MCF 10A (cell line): ENCODE measurements at regions of chr2 and their contacts with region 1.

Region 1: DNA sequence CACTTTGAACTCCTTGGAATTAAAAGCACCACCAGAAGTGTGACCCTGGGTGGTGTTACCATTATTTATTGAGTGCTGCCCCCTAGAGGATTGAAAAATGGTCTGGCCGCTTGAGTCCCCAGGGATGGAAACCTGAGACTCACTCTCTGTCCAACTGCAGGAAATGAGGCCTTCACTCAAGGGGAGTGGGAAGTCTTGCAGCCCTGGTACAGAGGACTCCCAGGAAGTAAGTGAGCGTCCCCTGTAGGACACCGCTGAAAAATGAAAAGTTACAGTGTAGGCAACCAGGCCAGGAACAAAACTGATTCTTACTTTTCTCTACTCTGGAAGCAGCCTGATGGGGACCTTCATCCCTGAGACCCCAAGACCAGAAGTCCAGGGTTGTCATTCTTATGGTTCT is 2.2 kb upstream of the NRP2 start:
- DNase-seq: peak; percentile 95
- H3K4me3 Mint-ChIP-seq: no peak overlapping the region
- H3K27ac Mint-ChIP-seq: no peak overlapping the region
- H3K4me1 Mint-ChIP-seq: peaks cover 25% of the 10 kb centered on the region
- H3K27me3 Mint-ChIP-seq: no peaks in the 10 kb centered on the region
- CTCF ChIP-seq: peak; percentile 61

Region 2: DNA sequence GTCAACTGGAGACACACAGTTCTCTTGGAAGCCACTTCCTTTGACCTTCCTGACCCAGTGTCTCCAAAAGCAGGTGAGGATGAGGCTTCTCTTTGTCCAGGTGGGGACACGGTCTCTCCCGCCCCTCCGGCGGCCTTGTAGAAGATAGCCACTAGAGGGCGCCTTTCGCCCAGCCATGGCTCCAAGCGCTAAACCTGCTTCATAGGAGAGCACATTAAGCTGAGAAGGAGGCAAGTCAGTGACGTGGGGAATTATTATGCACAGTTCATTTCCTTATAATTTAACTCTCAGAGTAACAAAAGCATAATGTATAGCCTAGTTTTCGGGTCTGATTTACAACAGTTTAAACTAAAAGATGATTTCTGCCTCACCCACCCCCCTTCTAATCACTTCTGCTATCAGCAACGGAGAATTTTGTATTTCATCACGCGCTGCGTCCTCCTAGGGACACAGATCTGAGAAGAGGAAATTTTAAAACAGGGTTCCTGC is 1534.8 kb before region 1 on chr2:
- CTCF ChIA-PET with region 1: no interaction called
- POLR2A ChIA-PET with region 1: no interaction called
- intact Hi-C with region 1: loop called (anchors 5 kb)
- DNase-seq: peak; percentile 81
- H3K4me3 Mint-ChIP-seq: peak overlapping the region; percentile 69
- H3K27ac Mint-ChIP-seq: no peak overlapping the region
- H3K4me1 Mint-ChIP-seq: peaks cover 5% of the 10 kb centered on the region
- H3K27me3 Mint-ChIP-seq: peaks cover 57% of the 10 kb centered on the region
- CTCF ChIP-seq: peak; percentile 90

Region 3: DNA sequence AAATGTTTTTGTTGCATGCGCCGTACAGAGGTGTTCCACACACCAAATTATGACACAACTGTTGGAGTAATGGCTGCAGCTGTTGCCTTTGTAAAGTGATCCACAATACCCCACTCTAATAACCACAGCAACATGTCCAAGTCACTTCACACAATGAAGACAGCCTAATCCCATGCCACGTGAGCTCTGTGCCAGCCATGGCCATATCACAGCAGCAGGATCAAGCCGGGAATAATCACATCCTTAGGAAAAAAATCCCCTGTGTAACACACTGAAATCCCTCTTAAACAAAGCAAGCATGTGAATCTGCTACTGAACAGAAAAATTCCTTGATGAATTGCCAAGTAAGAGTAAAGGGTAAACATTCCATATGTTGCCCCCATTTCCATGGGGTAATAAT is 1314.3 kb before region 1 on chr2:
- CTCF ChIA-PET with region 1: interaction called, 11 read pairs
- POLR2A ChIA-PET with region 1: no interaction called
- intact Hi-C with region 1: no loop called
- DNase-seq: no peak
- H3K4me3 Mint-ChIP-seq: no peak overlapping the region
- H3K27ac Mint-ChIP-seq: no peak overlapping the region
- H3K4me1 Mint-ChIP-seq: no peaks in the 10 kb centered on the region
- H3K27me3 Mint-ChIP-seq: no peaks in the 10 kb centered on the region
- CTCF ChIP-seq: no peak

Region 4: GRCh38 chr2:204871231-204871953 is 808.7 kb before region 1 on chr2:
- CTCF ChIA-PET with region 1: interaction called, 61 read pairs
- POLR2A ChIA-PET with region 1: no interaction called
- intact Hi-C with region 1: loop called (anchors 1 kb)
- DNase-seq: peak; percentile 47
- H3K4me3 Mint-ChIP-seq: no peak overlapping the region
- H3K27ac Mint-ChIP-seq: peak overlapping the region; percentile 7
- H3K4me1 Mint-ChIP-seq: peaks cover 17% of the 10 kb centered on the region
- H3K27me3 Mint-ChIP-seq: no peaks in the 10 kb centered on the region
- CTCF ChIP-seq: peak; percentile 30

Region 5: DNA sequence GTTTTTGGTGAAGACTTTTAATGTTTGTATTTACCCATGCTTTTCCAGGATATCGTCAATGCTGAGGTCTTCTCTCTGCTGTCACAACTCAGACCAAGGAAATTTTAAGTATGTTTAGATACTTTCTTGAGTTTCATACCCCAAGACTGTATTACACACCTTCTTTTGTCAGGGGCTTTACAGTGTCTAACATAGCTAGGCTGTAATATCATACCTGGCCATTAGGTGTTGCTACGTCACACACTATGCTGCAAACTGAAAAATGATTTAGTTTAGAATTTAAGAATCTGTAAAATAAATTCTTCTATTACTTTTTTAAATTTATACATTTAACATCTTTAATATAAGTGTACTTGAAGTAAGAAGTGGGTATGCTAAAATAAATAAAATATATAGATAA is 356.1 kb before region 1 on chr2:
- CTCF ChIA-PET with region 1: interaction called, 30 read pairs
- POLR2A ChIA-PET with region 1: no interaction called
- intact Hi-C with region 1: loop called (anchors 1 kb)
- DNase-seq: peak; percentile 25
- H3K4me3 Mint-ChIP-seq: no peak overlapping the region
- H3K27ac Mint-ChIP-seq: no peak overlapping the region
- H3K4me1 Mint-ChIP-seq: peaks cover 5% of the 10 kb centered on the region
- H3K27me3 Mint-ChIP-seq: no peaks in the 10 kb centered on the region
- CTCF ChIP-seq: peak; percentile 74

Region 6: GRCh38 chr2:205808486-205809121 is 128.5 kb after region 1 on chr2:
- CTCF ChIA-PET with region 1: interaction called, 4 read pairs
- POLR2A ChIA-PET with region 1: no interaction called
- intact Hi-C with region 1: loop called (anchors 1 kb)
- DNase-seq: peak; percentile 35
- H3K4me3 Mint-ChIP-seq: no peak overlapping the region
- H3K27ac Mint-ChIP-seq: no peak overlapping the region
- H3K4me1 Mint-ChIP-seq: peaks cover 5% of the 10 kb centered on the region
- H3K27me3 Mint-ChIP-seq: no peaks in the 10 kb centered on the region
- CTCF ChIP-seq: no peak

Region 7: DNA sequence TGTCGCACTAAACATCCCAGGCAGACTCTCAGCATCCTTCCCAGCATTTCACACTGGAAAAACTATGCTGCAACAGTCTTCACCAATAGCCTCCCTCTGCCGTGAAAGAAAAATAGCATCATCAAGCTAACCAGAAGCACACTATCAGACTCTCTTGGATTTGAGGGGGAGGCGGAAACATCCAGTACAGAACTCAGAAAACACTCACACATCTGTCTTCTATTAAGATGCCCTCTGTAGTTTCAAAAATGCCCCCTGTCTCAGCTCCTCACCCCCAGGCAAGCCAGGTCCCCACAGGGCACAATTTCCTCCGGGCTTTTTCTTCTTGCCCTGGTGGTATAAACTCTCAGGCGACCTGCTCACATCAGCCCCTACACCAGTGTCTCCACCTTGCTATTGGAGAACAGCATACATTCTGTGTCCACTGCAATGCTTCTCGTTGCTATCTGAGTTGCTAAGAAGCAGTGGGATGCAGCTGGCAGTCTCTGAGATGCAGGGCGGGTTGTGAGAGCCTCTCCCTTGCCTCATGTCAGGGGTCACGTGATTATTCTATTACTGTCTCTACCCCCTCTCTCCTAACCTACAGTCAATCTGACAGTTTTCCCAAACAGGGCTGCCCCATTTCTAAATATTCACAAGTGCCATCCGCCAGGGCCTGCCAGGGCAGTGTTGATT is 216.1 kb after region 1 on chr2:
- CTCF ChIA-PET with region 1: no interaction called
- POLR2A ChIA-PET with region 1: no interaction called
- intact Hi-C with region 1: no loop called
- DNase-seq: no peak
- H3K4me3 Mint-ChIP-seq: no peak overlapping the region
- H3K27ac Mint-ChIP-seq: no peak overlapping the region
- H3K4me1 Mint-ChIP-seq: peaks cover 8% of the 10 kb centered on the region
- H3K27me3 Mint-ChIP-seq: peaks cover 12% of the 10 kb centered on the region
- CTCF ChIP-seq: no peak